ENCODE measurements at regions of chr12 and their contacts with region 1.

Region 1: DNA sequence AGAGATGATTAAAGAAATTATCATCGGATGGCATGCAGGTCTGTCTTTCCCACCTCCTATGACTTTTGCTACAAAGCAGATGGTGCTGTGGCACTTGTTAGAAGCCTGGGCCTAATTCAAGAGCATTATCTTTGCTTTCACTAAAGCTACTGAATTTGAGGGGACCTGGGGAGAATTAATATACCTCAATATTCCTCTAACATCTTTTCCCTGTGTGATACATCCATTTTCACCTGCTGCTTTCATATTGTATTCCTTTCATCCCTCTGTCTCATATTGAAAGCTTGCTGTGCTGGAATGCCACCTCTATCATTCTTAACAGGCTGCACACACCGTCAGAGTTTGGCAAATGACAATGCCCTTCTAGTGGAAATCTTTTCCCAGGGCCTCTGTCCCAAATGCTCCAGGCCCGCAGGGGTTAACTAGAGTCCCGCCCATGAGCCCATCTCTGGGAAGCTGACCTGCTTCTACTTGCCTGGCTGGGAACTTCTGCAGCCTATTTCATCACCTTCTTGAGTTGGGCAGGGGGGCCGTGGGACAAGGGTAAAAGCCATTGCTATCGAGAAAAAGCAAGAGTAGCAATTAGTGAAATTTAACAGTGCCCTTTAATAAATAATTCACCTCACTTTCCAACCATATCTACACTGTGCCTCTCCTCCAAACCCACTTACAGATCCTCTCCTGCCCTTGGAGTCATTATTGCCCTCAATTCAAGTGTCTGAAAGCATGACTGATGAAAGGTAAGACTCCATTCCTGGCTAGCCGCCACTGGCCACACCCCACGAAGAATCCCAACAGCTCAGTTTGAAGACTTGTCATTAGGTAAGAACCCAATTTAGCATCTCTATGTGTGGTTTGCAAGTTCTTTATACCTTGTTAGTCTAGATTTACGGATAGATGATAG is 126.7 kb upstream of the BTG1 start:
- DNase-seq: no peak
- CTCF ChIP-seq: no peak

Region 2: GRCh38 chr12:92259852-92260251 is 12.5 kb before region 1 on chr12:
- CTCF ChIA-PET with region 1: interaction called, 12 read pairs
- POLR2A ChIA-PET with region 1: no interaction called
- DNase-seq: no peak
- CTCF ChIP-seq: no peak

Measured in GM10248 (cell line).